ENCODE measurements at regions of chr1 and their contacts with region 1.

Region 1: GRCh38 chr1:210584439-210585113 is 255.9 kb downstream of the HHAT start:
- DNase-seq: peak; percentile 37
- H3K4me3 Mint-ChIP-seq: no peak overlapping the region
- H3K27ac Mint-ChIP-seq: no peak overlapping the region
- H3K4me1 Mint-ChIP-seq: peaks cover 9% of the 10 kb centered on the region
- H3K27me3 Mint-ChIP-seq: no peaks in the 10 kb centered on the region

Region 2: DNA sequence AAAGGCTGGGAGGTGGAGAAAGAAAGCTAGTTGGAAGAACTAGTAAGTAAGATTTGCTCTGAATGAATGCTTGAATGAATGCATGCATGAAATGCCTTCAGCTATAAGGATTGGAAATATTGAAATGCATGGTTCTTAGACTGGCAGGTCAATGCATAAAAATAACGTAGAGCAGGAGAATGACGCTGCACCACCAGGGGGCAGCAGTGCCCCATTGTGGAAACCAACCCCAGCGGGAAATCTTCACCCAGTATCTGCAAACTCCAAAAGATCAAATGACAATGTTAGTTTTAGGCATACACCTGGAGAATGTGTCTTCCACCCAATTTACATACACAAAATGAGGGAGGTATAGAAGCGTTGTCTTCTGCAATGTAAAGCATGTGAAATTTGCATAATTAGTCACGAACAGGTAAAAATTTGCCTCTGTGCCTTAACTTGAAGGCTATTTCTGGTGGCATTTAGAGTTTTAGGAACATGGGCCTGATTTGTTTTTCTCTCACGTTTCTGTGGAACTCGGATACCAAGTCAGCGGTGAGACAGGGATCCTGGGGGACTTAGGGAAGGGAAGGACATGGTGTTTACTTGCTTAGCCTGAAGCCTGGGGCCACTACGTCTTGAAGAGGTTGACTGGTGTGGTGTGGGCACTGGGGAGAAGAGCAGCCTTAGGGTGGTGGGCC is 177.2 kb before region 1 on chr1:
- intact Hi-C with region 1: loop called (anchors 1 kb)
- DNase-seq: peak; percentile 49
- H3K4me3 Mint-ChIP-seq: no peak overlapping the region
- H3K27ac Mint-ChIP-seq: no peak overlapping the region
- H3K4me1 Mint-ChIP-seq: no peaks in the 10 kb centered on the region
- H3K27me3 Mint-ChIP-seq: peaks cover 6% of the 10 kb centered on the region

Region 3: DNA sequence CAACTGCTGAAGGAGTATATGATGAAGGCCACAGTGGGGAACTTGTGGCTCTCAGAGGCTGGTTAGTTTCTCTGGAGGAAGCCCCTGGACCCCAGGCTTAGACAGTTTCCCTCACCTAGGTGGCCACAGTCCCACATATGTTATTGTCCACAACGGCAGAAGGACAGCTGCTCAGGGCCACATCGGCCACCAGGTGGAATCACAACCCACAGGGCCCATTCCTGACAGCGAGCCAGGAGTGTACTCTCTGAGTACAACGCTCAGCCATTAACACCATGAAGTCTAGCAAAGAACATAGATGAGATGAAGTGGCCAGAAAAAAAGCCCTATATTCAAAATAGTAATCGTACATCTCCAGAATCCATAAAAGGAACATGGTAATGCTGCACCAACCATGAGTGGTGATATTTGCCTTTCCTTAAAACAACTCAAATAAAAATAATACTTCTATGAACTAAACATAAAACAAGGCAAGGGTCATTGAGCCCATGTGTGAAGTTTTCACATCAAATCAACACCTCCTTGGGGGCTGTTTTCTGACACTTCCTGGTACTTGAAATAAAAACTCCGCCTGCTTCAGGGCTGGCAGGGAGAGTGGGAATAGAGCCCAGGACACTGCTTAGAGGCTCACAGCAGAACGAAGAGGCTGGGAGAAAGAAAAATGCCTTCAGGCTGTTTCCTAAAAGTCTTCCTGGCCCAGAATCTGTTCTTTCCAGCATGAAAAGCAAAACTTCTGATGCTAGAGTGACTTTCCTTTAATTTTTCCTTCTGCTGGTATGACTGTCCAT is 127.4 kb after region 1 on chr1:
- intact Hi-C with region 1: no loop called
- DNase-seq: no peak
- H3K4me3 Mint-ChIP-seq: no peak overlapping the region
- H3K27ac Mint-ChIP-seq: no peak overlapping the region
- H3K4me1 Mint-ChIP-seq: no peaks in the 10 kb centered on the region
- H3K27me3 Mint-ChIP-seq: no peaks in the 10 kb centered on the region

Measured in activated T-helper 1 cell treated with anti-CD3 and anti-CD28 coated beads, Interleukin-12 subunit alpha, Interleukin-12 subunit beta, Interleukin-2, Interleukin-4 antibody, amounts not matched to agents 30 ng/mL and 10 ng/mL and 1 ng/mL, durations not matched to agents 14 hours and 24 hours and 36 hours (primary cell).